Caco-2 (cell line): ENCODE measurements at regions of chr3 and their contacts with region 1.

Region 1: GRCh38 chr3:12405432-12406272 is 78.6 kb upstream of the TSEN2 start:
- DNase-seq: peak; percentile 84 to 94
- H3K4me3 ChIP-seq: no peak overlapping the region
- H3K4me3 Mint-ChIP-seq: peak overlapping the region; percentile 68
- H3K27ac Mint-ChIP-seq: peak overlapping the region; percentile 46
- H3K4me1 ChIP-seq: peaks cover 57% of the 10 kb centered on the region
- H3K4me1 Mint-ChIP-seq: peaks cover 25% of the 10 kb centered on the region
- H3K27me3 ChIP-seq: no peaks in the 10 kb centered on the region
- H3K27me3 Mint-ChIP-seq: no peaks in the 10 kb centered on the region
- CTCF ChIP-seq: no peak

Region 2: GRCh38 chr3:12334786-12335185 is 70.9 kb before region 1 on chr3:
- CTCF ChIA-PET with region 1: no interaction called
- POLR2A ChIA-PET with region 1: no interaction called
- intact Hi-C with region 1: loop called (anchors 5 kb)
- DNase-seq: no peak
- H3K4me3 ChIP-seq: no peak overlapping the region
- H3K4me3 Mint-ChIP-seq: no peak overlapping the region
- H3K27ac Mint-ChIP-seq: no peak overlapping the region
- H3K4me1 ChIP-seq: 0 out of 2 replicates have a peak, but pooled peaks cover 5% of the 10 kb centered on the region
- H3K4me1 Mint-ChIP-seq: peaks cover 3% of the 10 kb centered on the region
- H3K27me3 ChIP-seq: no peaks in the 10 kb centered on the region
- H3K27me3 Mint-ChIP-seq: no peaks in the 10 kb centered on the region
- CTCF ChIP-seq: no peak